Left ventricle myocardium inferior (tissue), 1 donor: ENCODE measurements at regions of chr18 and their contacts with region 1.

Region 1: DNA sequence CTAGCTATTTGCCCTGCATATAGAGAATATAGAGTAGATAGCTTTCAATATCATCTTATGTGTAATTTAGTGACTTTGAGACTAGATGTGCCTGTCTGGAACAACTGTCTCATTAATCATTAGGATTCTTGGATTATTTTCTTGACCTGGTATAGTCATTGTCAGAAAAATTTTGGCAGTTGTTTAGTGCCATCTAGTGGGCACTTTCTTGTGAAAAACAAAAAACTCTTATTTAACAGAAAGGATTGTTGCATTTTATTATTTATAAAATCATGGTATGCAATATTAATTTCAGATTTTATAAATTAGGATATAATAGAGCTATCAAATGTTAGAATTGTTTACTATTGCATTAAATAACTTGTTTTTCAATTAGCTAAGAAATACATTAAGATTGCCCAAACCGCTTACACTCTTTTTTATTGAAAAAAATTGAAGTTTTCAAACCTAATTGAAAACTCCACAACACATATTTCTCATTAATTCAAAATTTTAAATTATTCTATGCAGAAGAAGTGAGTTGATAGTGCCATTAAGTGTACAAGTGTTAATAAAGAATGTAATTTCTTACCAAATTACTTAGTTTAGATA is 80.3 kb downstream of the DYNAP start:
- DNase-seq: no peak
- H3K4me3 ChIP-seq: no peak overlapping the region
- H3K27ac ChIP-seq: no peak overlapping the region
- H3K4me1 ChIP-seq: no peaks in the 10 kb centered on the region
- H3K27me3 ChIP-seq: peaks cover 6% of the 10 kb centered on the region
- CTCF ChIP-seq: peak; percentile 64

Region 2: GRCh38 chr18:54392543-54393023 is 278.8 kb before region 1 on chr18:
- intact Hi-C with region 1: loop called (anchors 5 kb)
- DNase-seq: no peak
- H3K4me3 ChIP-seq: no peak overlapping the region
- H3K27ac ChIP-seq: no peak overlapping the region
- H3K4me1 ChIP-seq: no peaks in the 10 kb centered on the region
- H3K27me3 ChIP-seq: peaks cover 2% of the 10 kb centered on the region
- CTCF ChIP-seq: peak; percentile 83